Breast epithelium (tissue), 4 donors: ENCODE measurements at regions of chr15 and their contacts with region 1.

Region 1: DNA sequence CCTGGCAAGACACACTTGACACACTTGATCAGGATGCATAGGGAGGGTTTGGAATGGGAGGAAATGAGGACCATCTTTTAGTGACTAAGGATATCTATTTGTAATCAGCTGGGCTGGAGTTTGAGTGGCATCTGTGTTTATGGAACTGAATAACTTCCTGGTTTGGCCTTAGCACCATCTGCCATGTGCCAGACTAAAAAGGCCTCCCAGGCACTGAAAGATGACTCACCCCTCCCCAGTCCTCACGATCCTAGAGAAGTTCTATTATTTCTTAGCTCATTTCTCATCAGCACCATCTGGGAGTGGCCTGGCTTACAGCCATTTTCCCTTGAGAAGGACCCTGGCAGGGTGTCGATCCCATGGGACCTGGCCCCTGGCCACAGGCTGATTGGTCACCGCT is 23.9 kb upstream of the CTXND1 start:
- DNase-seq: no peak
- H3K4me3 ChIP-seq: no peak overlapping the region
- H3K27ac ChIP-seq: no peak overlapping the region
- H3K4me1 ChIP-seq: no peaks in the 10 kb centered on the region
- H3K27me3 ChIP-seq: no peaks in the 10 kb centered on the region
- CTCF ChIP-seq: no peak
- POLR2A ChIP-seq: no peak

Region 2: GRCh38 chr15:79308878-79309277 is 967.1 kb before region 1 on chr15:
- intact Hi-C with region 1: loop called (anchors 5 kb)
- DNase-seq: no peak
- H3K4me3 ChIP-seq: no peak overlapping the region
- H3K27ac ChIP-seq: no peak overlapping the region
- H3K4me1 ChIP-seq: no peaks in the 10 kb centered on the region
- H3K27me3 ChIP-seq: no peaks in the 10 kb centered on the region
- CTCF ChIP-seq: no peak
- POLR2A ChIP-seq: no peak

Region 3: DNA sequence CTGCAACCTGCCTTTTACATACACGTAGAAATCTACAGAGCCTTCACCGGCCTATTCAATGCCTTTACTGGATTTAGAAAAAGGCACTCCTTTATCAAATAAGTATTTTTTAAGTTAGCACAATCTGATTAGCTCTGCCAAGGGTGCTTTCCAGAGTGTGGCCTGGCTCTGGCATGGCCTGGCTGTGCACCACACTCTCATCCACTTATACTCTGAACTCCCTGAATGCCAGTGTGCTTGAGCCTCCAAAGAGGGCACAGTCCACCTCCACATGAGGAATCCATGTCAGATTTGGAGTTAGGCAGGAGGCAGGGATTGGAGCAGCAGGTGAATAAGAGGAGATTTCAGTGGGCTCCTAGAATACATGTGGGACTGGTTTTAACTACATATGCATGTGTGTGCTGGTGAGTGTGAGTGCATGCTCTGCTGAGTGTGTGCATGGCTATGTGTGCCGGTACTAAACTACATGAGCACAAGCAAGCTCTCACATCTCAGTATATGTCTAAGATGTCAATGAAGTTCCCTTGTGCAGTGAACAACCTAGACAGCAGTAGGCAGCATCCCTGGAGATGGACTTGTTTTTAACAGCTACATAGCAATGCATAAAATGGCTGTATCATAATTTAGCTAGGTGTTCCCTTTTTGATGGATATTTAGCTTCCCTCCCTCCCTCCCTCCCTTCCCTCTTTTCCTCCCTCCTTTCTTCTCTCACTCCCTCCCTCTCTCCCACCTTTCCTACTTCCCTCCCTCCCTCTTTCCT is 234.3 kb before region 1 on chr15:
- intact Hi-C with region 1: no loop called
- DNase-seq: no peak
- H3K4me3 ChIP-seq: no peak overlapping the region
- H3K27ac ChIP-seq: no peak overlapping the region
- H3K4me1 ChIP-seq: no peaks in the 10 kb centered on the region
- H3K27me3 ChIP-seq: no peaks in the 10 kb centered on the region
- CTCF ChIP-seq: no peak
- POLR2A ChIP-seq: no peak

Region 4: GRCh38 chr15:80259942-80260510 is 15.9 kb before region 1 on chr15:
- intact Hi-C with region 1: loop called (anchors 2 kb)
- DNase-seq: no peak
- H3K4me3 ChIP-seq: no peak overlapping the region
- H3K27ac ChIP-seq: no peak overlapping the region
- H3K4me1 ChIP-seq: no peaks in the 10 kb centered on the region
- H3K27me3 ChIP-seq: peaks cover 0 to 58% of the 10 kb centered on the region in 2 donors
- CTCF ChIP-seq: no peak
- POLR2A ChIP-seq: no peak